AG04450 (cell line): ENCODE measurements at regions of chr1 and their contacts with region 1.

Region 1: DNA sequence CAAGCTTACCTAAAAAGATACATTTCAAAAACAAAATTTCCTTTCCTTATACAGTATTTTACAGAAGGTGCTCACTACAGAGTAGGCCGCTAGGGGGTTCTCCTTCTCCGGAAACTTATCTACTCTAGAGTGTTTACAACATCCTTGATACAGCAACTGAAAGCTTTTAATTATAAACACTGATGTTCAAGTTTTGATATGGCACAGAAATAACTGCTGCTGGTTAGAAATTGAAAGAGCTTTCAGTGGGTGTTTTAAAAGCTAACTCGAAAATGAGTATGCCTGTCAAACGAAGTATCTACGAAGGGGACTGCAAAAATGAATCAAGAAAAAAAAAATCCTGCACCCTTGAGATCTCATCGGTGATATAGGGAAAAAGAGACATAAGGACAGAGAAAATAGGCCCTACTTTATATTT is 1.0 kb downstream of the YOD1 start:
- DNase-seq: no peak
- H3K4me3 ChIP-seq: peak overlapping the region; percentile 75
- H3K27ac ChIP-seq: peak overlapping the region; percentile 79
- H3K27me3 ChIP-seq: peaks cover 7% of the 10 kb centered on the region
- CTCF ChIP-seq: peak; percentile 86

Region 2: DNA sequence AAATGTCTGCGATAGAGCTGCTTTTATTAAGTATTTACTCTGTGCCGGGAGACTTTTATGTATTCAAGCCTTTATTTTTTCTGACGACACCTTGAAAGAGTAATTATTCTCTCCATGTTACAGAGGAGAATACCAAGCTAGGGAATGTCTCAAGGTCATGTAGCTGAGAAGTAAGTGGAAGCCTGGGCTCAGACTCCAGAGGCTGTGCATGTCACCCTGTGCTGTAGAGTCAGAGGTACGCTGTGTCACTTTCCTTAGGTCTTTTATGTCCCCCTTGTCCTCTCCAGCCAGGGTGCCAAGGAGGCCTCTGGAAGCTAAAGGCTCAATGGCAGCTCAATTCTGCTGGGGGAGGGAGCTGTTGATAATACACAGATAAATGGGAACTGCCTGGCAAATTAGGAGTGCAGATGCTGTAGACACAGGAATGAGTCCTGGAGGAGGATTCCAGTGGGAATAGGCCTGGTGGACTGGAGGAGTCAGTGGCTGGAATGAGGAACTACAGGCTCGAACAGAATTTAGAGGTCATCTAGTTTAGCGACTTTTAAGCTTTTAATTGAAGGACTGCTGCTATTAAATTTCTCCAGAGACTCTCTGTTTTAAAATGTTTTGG is 288.7 kb before region 1 on chr1:
- CTCF ChIA-PET with region 1: no interaction called
- POLR2A ChIA-PET with region 1: no interaction called
- DNase-seq: no peak
- H3K4me3 ChIP-seq: no peak overlapping the region
- H3K27ac ChIP-seq: no peak overlapping the region
- H3K27me3 ChIP-seq: no peaks in the 10 kb centered on the region
- CTCF ChIP-seq: peak; percentile 47

Region 3: DNA sequence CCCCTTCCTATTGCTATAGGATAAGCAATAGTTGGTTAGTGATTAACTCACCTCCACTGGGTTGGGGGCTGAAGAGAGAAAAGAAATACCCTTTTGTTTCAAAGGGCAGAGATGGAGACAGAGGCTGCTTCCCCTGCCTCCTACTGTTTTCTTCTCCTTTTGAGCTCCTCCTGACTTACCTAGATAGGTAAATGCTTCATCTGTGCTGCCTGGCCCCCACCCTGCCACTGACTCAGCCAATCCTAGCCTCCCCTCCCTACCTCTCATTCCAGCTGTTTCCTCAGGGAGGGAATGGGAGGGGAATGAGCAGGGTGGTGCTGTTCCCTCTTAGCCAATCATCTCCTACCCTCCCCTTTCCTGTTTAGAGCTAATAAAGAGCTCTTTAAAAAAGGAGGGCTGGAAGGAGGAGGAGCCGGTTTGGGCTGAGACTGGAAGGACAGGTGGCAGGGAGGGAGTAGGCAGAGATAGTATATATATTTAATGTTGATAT is 17.4 kb before region 1 on chr1 and contains the start of gene C1orf116:
- CTCF ChIA-PET with region 1: interaction called, 20 read pairs
- POLR2A ChIA-PET with region 1: no interaction called
- DNase-seq: no peak
- H3K4me3 ChIP-seq: no peak within 1 kb of the TSS
- H3K27ac ChIP-seq: no peak within 1 kb of the TSS
- H3K27me3 ChIP-seq: peaks cover 9% of the 10 kb centered on the region
- CTCF ChIP-seq: no peak
- polyA plus RNA-seq, gene C1orf116: not detected in 2 replicates

Region 4: DNA sequence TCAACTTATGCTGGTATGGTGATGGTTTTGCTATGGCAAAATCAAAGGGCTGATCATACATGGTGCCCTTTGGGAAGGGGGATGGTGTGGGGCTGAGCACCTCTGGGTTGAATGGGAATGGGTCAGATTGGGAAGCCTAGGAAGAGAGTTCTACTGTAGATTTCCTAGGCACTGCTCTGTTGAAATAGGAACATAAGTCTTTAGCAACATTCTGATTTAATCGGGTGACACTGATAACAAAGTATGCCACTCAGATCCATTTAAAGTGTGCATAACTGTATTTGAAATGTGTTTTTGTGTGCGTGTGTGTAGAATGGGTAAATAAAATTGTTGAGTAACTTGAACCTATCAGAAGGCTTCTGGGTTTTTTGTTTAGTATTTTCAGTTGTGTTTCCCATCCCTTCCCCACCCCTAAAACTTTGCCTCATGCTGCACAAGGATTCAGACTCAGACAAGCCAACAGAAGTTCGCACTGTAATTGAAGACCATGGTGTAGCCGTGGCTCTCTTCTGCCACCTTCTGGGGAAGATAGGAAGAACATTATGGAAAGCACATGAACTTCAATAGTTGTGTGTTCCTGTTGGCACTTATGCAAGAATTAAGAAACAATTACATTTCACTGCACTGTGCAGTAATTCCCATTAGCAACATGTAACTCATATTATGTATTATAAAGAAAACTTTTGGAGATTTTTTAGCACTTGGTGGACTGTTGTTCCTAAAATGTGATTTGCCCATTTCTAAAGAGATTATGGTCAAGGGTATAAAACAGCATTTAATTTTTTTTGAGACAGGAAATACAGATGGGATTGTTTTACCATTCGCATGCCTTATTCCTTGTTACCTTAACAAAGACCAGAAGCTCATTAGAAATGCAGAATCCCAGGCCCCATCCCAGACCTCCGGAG is 27.7 kb after region 1 on chr1:
- CTCF ChIA-PET with region 1: interaction called, 15 read pairs
- POLR2A ChIA-PET with region 1: no interaction called
- DNase-seq: peak; percentile 54
- H3K4me3 ChIP-seq: no peak overlapping the region
- H3K27ac ChIP-seq: no peak overlapping the region
- H3K27me3 ChIP-seq: peaks cover 7% of the 10 kb centered on the region
- CTCF ChIP-seq: peak; percentile 95